ENCODE measurements at regions of chr4 and their contacts with region 1.

Region 1: DNA sequence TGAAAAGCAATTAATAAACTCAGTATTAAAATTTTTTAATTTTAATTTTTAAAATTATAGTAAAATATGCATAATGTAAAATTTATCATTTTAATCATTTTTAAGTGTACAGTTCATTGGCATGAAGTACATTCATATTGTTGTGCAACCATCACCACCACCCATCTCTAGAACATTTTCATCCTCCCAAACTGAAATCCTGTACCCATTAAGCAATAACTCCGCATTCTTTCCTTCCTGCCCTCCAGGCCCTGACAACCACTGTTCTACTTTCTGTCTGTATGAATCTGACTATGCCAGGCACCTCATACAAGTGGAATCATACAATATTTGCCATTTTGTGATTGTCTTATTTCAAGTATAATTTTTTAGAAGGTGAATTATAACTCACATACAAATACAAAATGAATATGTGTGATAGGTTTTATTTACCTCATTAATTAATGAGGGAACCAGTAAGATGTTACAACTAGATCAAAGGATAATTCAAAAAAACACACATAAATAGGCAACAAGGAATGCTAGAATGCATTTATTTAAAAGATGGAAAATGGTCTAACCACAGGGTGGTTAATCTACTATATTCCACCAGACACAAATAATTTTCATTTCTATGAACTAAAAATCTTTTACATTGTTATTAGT is 13.1 kb upstream of the AFF1 start:
- DNase-seq: no peak
- H3K4me3 ChIP-seq: no peak overlapping the region
- H3K27ac ChIP-seq: no peak overlapping the region
- H3K4me1 ChIP-seq: peaks cover 19% of the 10 kb centered on the region
- H3K27me3 ChIP-seq: no peaks in the 10 kb centered on the region
- CTCF ChIP-seq: no peak
- POLR2A ChIP-seq: no peak

Region 2: DNA sequence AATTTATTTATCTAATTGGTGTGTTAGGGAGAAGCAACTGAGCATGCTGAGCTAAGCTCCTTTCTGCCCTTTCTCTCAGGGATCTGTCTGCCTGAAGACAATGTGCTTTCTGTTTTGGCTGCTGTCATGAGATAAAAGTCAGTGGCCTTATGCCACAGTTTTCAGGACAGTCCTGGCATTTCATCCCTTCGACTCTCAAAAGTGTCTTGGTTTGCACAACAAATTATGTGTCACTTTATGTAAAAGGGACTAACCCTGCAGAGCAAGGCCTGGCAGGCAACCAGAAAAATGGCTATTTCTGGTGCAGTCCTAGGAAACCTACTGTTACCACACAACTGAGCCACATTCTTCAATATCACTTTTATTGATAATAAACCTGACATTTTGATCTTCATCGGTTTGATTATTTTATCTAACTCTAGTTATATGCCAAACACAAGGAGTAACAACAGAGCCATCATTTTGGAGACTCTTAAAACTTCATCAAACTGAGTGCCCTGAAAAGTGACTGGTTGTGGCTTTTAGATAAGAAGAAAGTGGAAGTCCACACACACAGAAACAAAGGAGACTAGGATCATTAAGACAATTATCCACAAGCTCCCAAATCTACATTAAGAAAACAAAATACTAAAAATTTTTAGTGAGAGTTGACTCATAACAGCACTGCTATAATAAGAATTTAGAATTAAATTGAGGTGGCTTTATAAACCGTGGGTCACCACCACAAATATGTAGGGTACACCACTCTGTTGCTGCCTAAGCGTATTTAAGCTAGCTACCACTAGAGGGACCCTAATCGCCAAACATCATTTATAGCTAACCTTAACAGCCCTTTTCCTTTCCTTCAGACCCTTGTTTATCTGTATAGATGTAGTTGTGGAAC is 423.5 kb before region 1 on chr4:
- CTCF ChIA-PET with region 1: interaction called, 17 read pairs
- POLR2A ChIA-PET with region 1: no interaction called
- dilution Hi-C with region 1: no loop called
- intact Hi-C with region 1: no loop called
- DNase-seq: peak; percentile 56
- H3K4me3 ChIP-seq: no peak overlapping the region
- H3K27ac ChIP-seq: no peak overlapping the region
- H3K4me1 ChIP-seq: no peaks in the 10 kb centered on the region
- H3K27me3 ChIP-seq: no peaks in the 10 kb centered on the region
- CTCF ChIP-seq: peak; percentile 58 to 76
- POLR2A ChIP-seq: no peak

Region 3: GRCh38 chr4:86950831-86951525 is 29.2 kb after region 1 on chr4:
- CTCF ChIA-PET with region 1: interaction called, 10 read pairs
- POLR2A ChIA-PET with region 1: no interaction called
- dilution Hi-C with region 1: no loop called
- intact Hi-C with region 1: no loop called
- DNase-seq: no peak
- H3K4me3 ChIP-seq: no peak overlapping the region
- H3K27ac ChIP-seq: no peak overlapping the region
- H3K4me1 ChIP-seq: peaks cover 14% of the 10 kb centered on the region
- H3K27me3 ChIP-seq: no peaks in the 10 kb centered on the region
- CTCF ChIP-seq: no peak
- POLR2A ChIP-seq: no peak

Region 4: DNA sequence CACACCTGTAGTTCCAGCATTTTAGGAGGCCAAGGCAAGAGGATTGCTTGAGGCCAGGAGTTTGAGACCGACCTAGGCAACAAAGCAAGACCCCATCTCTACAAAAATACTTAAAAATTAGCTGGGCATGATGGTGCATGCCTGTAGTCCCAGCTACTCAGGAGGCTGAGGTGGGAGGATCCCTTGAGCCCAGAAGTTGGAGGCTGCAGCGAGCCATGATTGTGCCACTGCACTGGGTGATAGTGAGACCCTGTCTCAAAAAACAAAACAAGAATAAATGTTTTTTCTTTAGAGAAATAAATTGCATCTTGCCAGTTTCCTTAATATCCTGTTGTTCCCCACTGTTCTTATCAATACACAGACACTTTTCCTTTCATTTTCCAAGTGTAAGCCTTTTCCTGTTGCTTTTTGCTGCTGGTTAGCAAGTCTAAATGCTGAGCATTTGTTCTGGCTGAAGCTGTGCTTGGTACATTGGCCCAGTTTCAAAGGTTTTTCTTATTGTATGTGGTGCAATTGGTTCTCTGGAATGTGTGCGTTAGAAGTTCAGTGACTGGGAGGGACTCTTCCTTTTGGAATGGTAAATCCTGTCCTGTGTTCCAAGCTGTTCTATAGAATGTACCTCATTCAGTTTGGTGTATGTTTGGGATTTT is 111.3 kb after region 1 on chr4:
- CTCF ChIA-PET with region 1: interaction called, 25 read pairs
- POLR2A ChIA-PET with region 1: no interaction called
- dilution Hi-C with region 1: no loop called
- intact Hi-C with region 1: no loop called
- DNase-seq: peak; percentile 94
- H3K4me3 ChIP-seq: peak overlapping the region in 1 of 3 experiments; percentile 13
- H3K27ac ChIP-seq: peak overlapping the region; percentile 19
- H3K4me1 ChIP-seq: peaks cover 63% of the 10 kb centered on the region
- H3K27me3 ChIP-seq: no peaks in the 10 kb centered on the region
- CTCF ChIP-seq: no peak
- POLR2A ChIP-seq: peak; percentile 33

Region 5: DNA sequence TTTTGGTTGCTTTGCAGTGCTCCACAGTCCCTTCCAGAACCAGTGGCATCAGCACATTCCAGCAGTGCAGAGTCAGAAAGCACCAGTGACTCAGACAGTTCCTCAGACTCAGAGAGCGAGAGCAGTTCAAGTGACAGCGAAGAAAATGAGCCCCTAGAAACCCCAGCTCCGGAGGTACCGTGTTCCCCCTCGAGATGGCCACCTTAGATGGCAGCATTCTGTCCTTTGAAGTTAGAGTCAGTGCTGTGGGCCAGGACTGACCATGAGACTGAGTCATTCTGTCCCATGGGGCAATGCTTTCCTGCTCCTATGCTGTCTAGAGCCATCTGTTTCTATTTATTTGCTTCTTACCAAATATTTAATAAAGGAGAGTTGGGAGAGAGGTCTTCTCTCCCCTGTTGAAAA is 186.4 kb after region 1 on chr4:
- CTCF ChIA-PET with region 1: interaction called, 20 read pairs
- POLR2A ChIA-PET with region 1: no interaction called
- dilution Hi-C with region 1: loop called (anchors 25 kb)
- intact Hi-C with region 1: no loop called
- DNase-seq: peak; percentile 58
- H3K4me3 ChIP-seq: no peak overlapping the region
- H3K27ac ChIP-seq: peak overlapping the region; percentile 60
- H3K4me1 ChIP-seq: peaks cover 40% of the 10 kb centered on the region
- H3K27me3 ChIP-seq: no peaks in the 10 kb centered on the region
- CTCF ChIP-seq: no peak
- POLR2A ChIP-seq: no peak

Region 6: DNA sequence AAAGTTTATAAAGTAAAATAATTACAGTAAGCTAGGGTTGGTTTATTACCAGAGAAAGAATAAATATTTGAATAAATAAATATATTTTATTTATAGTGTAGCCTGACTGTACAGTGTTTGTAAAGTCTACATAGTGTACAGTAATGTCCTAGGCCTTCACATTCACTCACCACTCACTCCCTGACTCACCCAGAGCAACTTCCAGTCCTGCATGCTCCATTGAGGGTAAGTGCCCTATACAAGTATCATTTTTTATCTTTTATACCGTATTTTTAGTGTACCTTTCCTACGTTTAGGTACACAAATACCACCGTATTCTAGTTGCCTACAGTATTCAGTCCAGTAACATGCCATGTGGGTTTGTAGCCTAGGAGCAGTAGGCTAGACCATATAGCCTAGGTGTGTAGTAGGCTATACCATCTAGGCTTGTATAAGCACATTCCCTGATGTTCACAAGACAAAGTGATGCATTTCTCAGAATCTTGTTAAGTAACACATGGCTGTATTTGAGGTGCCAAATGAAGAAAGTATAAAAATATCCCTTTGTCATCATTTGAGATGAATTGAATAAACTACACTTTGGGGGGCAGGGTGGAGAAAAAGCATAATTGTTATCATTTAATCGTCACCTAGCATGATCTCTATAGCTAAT is 313.4 kb after region 1 on chr4:
- CTCF ChIA-PET with region 1: interaction called, 15 read pairs
- POLR2A ChIA-PET with region 1: no interaction called
- dilution Hi-C with region 1: no loop called
- intact Hi-C with region 1: loop called (anchors 1 kb)
- DNase-seq: no peak
- H3K4me3 ChIP-seq: peak overlapping the region in 2 of 3 experiments; percentile 74 to 96
- H3K27ac ChIP-seq: no peak overlapping the region
- H3K4me1 ChIP-seq: peaks cover 2% of the 10 kb centered on the region
- H3K27me3 ChIP-seq: peaks cover 0 to 6% of the 10 kb centered on the region in 2 experiments
- CTCF ChIP-seq: no peak
- POLR2A ChIP-seq: no peak

Region 7: DNA sequence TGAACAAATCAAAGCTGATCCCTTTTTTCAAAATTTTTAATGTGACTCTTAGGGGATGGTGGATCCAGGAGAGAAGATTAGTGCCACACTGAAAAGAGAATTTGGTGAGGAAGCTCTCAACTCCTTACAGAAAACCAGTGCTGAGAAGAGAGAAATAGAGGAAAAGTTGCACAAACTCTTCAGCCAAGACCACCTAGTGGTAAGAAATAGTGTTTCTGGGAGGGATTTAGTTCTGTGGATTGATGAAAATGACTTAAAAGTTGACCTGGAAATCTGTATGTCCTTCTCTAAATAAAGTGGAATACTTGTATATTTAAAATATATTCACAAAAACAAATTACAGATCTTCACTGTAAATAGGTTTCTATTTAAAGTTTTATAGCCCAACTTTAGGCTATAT is 529.8 kb after region 1 on chr4:
- CTCF ChIA-PET with region 1: no interaction called
- POLR2A ChIA-PET with region 1: no interaction called
- dilution Hi-C with region 1: no loop called
- intact Hi-C with region 1: no loop called
- DNase-seq: no peak
- H3K4me3 ChIP-seq: no peak overlapping the region
- H3K27ac ChIP-seq: no peak overlapping the region
- H3K4me1 ChIP-seq: no peaks in the 10 kb centered on the region
- H3K27me3 ChIP-seq: no peaks in the 10 kb centered on the region
- CTCF ChIP-seq: no peak
- POLR2A ChIP-seq: no peak

Measured in endothelial cell of umbilical vein (primary cell).